AG04449 (cell line): ENCODE measurements at regions of chr20 and their contacts with region 1.

Region 1: DNA sequence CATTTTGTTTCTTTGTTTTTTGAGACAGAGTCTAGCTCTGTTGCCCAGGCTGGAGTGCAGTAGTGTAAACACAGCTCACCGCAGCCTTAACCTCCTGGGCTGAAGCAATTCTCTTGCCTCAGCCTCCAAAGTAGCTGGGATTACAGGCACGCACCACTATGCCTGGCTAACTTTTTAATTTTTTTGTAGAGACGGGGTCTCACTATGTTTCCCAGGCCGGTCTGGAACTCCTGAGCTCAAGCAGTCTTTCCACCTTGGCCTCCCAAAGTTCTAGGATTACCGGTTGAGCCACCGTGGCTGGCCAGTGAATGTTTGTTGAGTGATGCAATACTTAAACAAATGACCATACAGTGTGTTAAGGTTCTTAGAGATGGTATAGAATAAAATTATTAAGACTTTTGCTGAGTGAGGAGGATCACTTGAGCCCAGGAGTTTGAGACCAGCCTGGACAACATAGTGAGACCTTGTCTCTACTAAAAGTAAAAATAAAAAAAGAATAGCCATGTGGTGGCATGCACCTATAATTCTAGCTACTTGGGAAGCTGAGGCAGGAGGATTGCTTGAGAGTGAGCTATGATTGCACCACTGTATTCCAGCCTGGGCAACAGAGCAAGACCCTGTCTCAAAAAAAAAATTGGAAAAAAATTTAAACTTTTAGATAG is 13.4 kb downstream of the CEP250 start:
- DNase-seq: no peak
- H3K4me3 ChIP-seq: no peak overlapping the region
- CTCF ChIP-seq: no peak

Region 2: GRCh38 chr20:35421322-35421721 is 47.5 kb before region 1 on chr20:
- CTCF ChIA-PET with region 1: no interaction called
- POLR2A ChIA-PET with region 1: no interaction called
- DNase-seq: no peak
- H3K4me3 ChIP-seq: no peak overlapping the region
- CTCF ChIP-seq: no peak

Region 3: GRCh38 chr20:35454881-35455609 is 13.8 kb before region 1 on chr20 and contains the start of gene CEP250:
- CTCF ChIA-PET with region 1: interaction called, 172 read pairs
- POLR2A ChIA-PET with region 1: interaction called, 5 read pairs
- DNase-seq: peak; percentile 53
- H3K4me3 ChIP-seq: peak within 1 kb of the TSS; percentile 82
- CTCF ChIP-seq: no peak